ENCODE measurements at regions of chr2 and their contacts with region 1.

Region 1: GRCh38 chr2:54330162-54330925 is 74.3 kb upstream of the TSPYL6 start:
- DNase-seq: peak; percentile 86 to 94
- H3K4me3 ChIP-seq: peak overlapping the region; percentile 27 to 67 (median 54)
- H3K27ac ChIP-seq: peak overlapping the region; percentile 40; the same call in 1 of the 2 replicates
- H3K4me1 ChIP-seq: peaks cover 3 to 9% (median 4%) of the 10 kb centered on the region in 4 experiments; a peak in 5 of 7 replicates
- H3K27me3 ChIP-seq: no peaks in the 10 kb centered on the region
- CTCF ChIP-seq: no peak
- EP300 ChIP-seq: no peak
- POLR2A ChIP-seq: peak; percentile 58 to 83
- RAD21 ChIP-seq: no peak

Region 2: GRCh38 chr2:54310311-54310710 is 20.0 kb before region 1 on chr2:
- CTCF ChIA-PET with region 1: no interaction called
- POLR2A ChIA-PET with region 1: no interaction called
- DNase-seq: no peak
- H3K4me3 ChIP-seq: no peak overlapping the region
- H3K27ac ChIP-seq: no peak overlapping the region
- H3K4me1 ChIP-seq: no peaks in the 10 kb centered on the region
- H3K27me3 ChIP-seq: no peaks in the 10 kb centered on the region
- CTCF ChIP-seq: no peak
- EP300 ChIP-seq: no peak
- POLR2A ChIP-seq: no peak
- RAD21 ChIP-seq: no peak

Region 3: DNA sequence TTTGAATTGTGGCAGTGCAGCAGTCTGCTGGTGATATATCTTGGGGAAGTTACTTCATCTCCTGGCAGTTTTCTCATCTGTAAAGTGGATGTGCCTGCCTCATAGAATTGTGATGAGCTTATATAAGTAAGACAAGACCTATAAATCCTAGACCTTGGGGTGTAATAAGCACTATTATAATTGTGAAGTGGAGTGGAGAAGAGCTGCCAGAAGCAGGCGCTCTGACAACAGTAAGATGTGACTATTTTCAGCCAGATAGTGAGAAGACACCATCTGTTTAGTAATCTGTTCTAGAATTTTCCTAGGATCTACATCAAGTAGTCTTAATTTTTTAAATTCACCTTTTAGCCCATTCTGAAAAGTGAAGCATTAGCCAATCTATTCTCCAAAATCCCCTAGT is 11.3 kb after region 1 on chr2:
- CTCF ChIA-PET with region 1: interaction called, 16 read pairs
- POLR2A ChIA-PET with region 1: no interaction called
- DNase-seq: no peak
- H3K4me3 ChIP-seq: no peak overlapping the region
- H3K27ac ChIP-seq: no peak overlapping the region
- H3K4me1 ChIP-seq: no peaks in the 10 kb centered on the region
- H3K27me3 ChIP-seq: no peaks in the 10 kb centered on the region
- CTCF ChIP-seq: peak in 2 of 3 experiments; percentile 33 to 50; a peak in 2 of 4 replicates
- EP300 ChIP-seq: no peak
- POLR2A ChIP-seq: no peak
- RAD21 ChIP-seq: peak; percentile 63 to 67